Ovary (tissue), 10 donors: ENCODE measurements at regions of chr10 and their contacts with region 1.

Region 1: GRCh38 chr10:98467506-98468346 is 21.0 kb upstream of the HPS1 start:
- DNase-seq: peak; percentile 68 to 77 (median 72)
- H3K4me3 ChIP-seq: peak overlapping the region; percentile 45
- H3K27ac ChIP-seq: no peak overlapping the region
- H3K4me1 ChIP-seq: peaks cover 9% of the 10 kb centered on the region
- H3K27me3 ChIP-seq: no peaks in the 10 kb centered on the region
- CTCF ChIP-seq: peak; percentile 65 to 67 (median 66)
- EP300 ChIP-seq: no peak
- POLR2A ChIP-seq: no peak

Region 2: DNA sequence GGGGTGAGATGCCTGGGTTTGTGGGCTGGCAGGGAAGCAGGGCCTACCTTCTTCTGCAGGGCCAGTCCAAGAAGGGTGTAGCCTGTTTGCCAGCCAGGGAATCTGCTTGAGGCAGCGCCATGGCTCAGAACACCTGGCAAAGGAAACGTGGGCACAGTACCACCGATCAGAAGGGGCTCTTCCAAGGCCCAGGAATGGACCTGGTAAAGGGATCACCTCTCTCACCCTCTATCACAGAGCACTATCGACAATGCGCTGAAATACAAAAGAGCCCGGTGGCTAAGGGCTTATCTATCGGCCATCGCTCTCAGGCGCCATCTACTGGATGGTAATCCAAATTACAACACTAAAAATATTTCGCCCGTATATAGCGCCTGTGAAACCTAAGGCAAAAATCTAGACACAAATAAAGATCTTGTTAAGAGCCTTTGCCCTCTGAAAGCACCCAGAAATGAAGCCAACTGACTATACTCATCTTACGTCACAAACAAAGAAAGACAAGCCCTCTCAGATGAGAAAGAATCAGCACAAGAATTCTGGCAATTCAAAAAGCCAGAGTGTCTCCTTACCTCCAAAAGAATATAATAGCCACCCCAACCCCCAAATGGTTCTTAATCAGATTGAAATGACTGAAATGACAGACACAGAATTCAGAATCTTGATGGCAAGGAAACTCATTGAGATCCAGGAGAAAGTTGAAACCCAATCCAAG is 196.8 kb after region 1 on chr10:
- intact Hi-C with region 1: loop called in 1 of 4 experiments (anchors 5 kb)
- DNase-seq: no peak
- H3K4me3 ChIP-seq: no peak overlapping the region
- H3K27ac ChIP-seq: no peak overlapping the region
- H3K4me1 ChIP-seq: no peaks in the 10 kb centered on the region
- H3K27me3 ChIP-seq: no peaks in the 10 kb centered on the region
- CTCF ChIP-seq: no peak
- EP300 ChIP-seq: no peak
- POLR2A ChIP-seq: no peak

Region 3: GRCh38 chr10:98957801-98958200 is 490.1 kb after region 1 on chr10:
- intact Hi-C with region 1: no loop called
- DNase-seq: no peak
- H3K4me3 ChIP-seq: no peak overlapping the region
- H3K27ac ChIP-seq: no peak overlapping the region
- H3K4me1 ChIP-seq: no peaks in the 10 kb centered on the region
- H3K27me3 ChIP-seq: no peaks in the 10 kb centered on the region
- CTCF ChIP-seq: no peak
- EP300 ChIP-seq: no peak
- POLR2A ChIP-seq: no peak

Region 4: GRCh38 chr10:99234791-99235657 is 767.3 kb after region 1 on chr10:
- intact Hi-C with region 1: loop called in 2 of 4 experiments (anchors 5 to 10 kb)
- DNase-seq: no peak
- H3K4me3 ChIP-seq: peak overlapping the region; percentile 48
- H3K27ac ChIP-seq: no peak overlapping the region
- H3K4me1 ChIP-seq: peaks cover 6% of the 10 kb centered on the region
- H3K27me3 ChIP-seq: no peaks in the 10 kb centered on the region
- CTCF ChIP-seq: no peak
- EP300 ChIP-seq: no peak
- POLR2A ChIP-seq: no peak

Region 5: GRCh38 chr10:99248824-99249223 is 781.1 kb after region 1 on chr10:
- intact Hi-C with region 1: loop called in 3 of 4 experiments (anchors 5 to 10 kb)
- DNase-seq: no peak
- H3K4me3 ChIP-seq: no peak overlapping the region
- H3K27ac ChIP-seq: no peak overlapping the region
- H3K4me1 ChIP-seq: no peaks in the 10 kb centered on the region
- H3K27me3 ChIP-seq: no peaks in the 10 kb centered on the region
- CTCF ChIP-seq: no peak
- EP300 ChIP-seq: no peak
- POLR2A ChIP-seq: no peak